RWPE1 (cell line): ENCODE measurements at regions of chr12 and their contacts with region 1.

Region 1: GRCh38 chr12:19757317-19757877 is 318.1 kb downstream of the AEBP2 start:
- DNase-seq: no peak
- H3K27ac ChIP-seq: no peak overlapping the region
- CTCF ChIP-seq: peak; percentile 30

Region 2: DNA sequence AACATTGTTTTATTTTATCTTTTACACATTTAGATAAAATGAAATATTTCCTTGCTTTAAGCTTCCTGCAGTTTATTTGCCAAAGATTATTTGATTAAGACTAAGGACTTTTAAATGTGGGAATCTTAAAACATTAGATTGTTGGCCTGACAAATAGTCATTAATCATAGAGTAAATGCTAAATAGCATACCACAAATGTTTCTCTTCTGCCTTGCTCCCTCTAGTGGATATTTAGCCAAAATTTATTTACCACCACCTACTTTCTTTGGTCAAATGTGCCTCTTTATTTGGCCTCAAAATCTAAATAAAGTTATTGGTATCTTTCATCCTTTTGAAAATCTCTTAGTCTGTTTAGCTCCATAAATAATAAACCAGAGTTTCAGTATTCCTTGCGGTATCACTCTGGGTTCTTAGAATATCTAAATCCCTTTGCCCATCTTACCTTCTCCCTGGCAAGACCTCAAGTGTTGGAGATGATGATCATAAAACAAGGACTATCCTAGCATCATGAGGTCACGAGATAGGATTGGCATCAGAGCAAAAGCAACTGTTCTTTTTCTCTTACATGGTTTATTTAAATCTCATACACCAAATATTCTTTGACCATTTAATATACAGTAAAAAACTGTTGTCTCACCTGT is 468.7 kb before region 1 on chr12:
- CTCF ChIA-PET with region 1: no interaction called
- POLR2A ChIA-PET with region 1: no interaction called
- DNase-seq: peak; percentile 38
- H3K27ac ChIP-seq: no peak overlapping the region
- CTCF ChIP-seq: peak; percentile 52

Region 3: GRCh38 chr12:19739183-19739776 is 18.1 kb before region 1 on chr12:
- CTCF ChIA-PET with region 1: interaction called, 11 read pairs
- POLR2A ChIA-PET with region 1: no interaction called
- DNase-seq: peak; percentile 21
- H3K27ac ChIP-seq: no peak overlapping the region
- CTCF ChIP-seq: peak; percentile 40

Region 4: DNA sequence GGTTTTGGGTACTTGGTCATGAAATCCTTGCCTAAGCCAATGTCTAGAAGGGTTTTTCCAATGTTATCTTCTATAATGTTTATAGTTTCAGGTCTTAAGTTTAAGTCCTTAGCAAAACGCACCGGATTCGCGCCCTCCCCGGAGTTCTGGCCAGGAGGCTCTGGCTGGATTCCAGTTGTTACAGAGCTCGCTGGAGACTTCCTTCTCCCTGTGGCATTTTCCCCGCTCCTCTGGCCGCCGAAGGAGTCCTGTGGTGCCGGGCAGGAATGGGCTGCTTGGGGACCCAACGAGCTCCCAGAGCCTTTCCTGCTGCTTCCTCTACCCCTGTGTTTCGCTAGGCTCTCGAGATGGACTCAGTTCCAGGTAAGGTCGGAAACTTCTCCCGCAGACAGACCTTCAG is 17.8 kb after region 1 on chr12:
- CTCF ChIA-PET with region 1: no interaction called
- POLR2A ChIA-PET with region 1: no interaction called
- DNase-seq: no peak
- H3K27ac ChIP-seq: no peak overlapping the region
- CTCF ChIP-seq: no peak